Naive thymus-derived CD4-positive, alpha-beta T cell (primary cell): ENCODE measurements at regions of chr4 and their contacts with region 1.

Region 1: DNA sequence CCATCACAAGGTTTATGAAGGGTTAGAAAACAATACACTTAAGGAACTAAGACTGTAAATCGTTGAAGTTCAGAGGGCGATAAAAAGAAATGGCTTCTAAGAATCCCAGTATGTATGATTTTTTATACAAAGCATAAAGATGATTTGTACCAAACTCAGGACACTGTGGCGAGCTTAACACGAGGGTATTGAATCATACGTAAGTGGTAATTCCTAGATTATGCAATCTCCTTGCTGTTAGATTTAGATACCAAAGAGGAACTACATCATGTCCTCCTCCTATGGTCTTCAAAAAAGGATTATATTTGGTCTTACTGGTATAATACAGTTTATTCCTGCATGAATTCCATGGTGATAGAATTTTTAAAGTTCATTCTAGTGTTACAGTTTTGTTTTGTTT is 23.9 kb downstream of the NFKB1 start:
- DNase-seq: no peak
- ATAC-seq: peak; percentile 51
- H3K4me3 ChIP-seq: no peak overlapping the region
- H3K4me3 Mint-ChIP-seq: peak overlapping the region in 3 of 10 donors; percentile 7 to 56 (median 8)
- H3K27ac ChIP-seq: no peak overlapping the region
- H3K27ac Mint-ChIP-seq: peak overlapping the region in 8 of 9 donors; percentile 11 to 95 (median 75)
- H3K4me1 ChIP-seq: peaks cover 11 to 63% of the 10 kb centered on the region in 2 donors
- H3K4me1 Mint-ChIP-seq: peaks cover 52 to 100% (median 90%) of the 10 kb centered on the region in 7 donors
- H3K27me3 ChIP-seq: no peaks in the 10 kb centered on the region
- H3K27me3 Mint-ChIP-seq: no peaks in the 10 kb centered on the region

Region 2: GRCh38 chr4:102439236-102439614 is 85.9 kb before region 1 on chr4:
- CTCF ChIA-PET with region 1: no interaction called
- POLR2A ChIA-PET with region 1: no interaction called
- intact Hi-C with region 1: no loop called
- DNase-seq: no peak
- ATAC-seq: no peak
- H3K4me3 ChIP-seq: no peak overlapping the region
- H3K4me3 Mint-ChIP-seq: no peak overlapping the region
- H3K27ac ChIP-seq: no peak overlapping the region
- H3K27ac Mint-ChIP-seq: peak overlapping the region in 1 of 9 donors; percentile 29
- H3K4me1 ChIP-seq: no peaks in the 10 kb centered on the region
- H3K4me1 Mint-ChIP-seq: peaks cover 0 to 3% (median 0%) of the 10 kb centered on the region in 7 donors
- H3K27me3 ChIP-seq: no peaks in the 10 kb centered on the region
- H3K27me3 Mint-ChIP-seq: peaks cover 0 to 9% (median 0%) of the 10 kb centered on the region in 5 donors

Region 3: DNA sequence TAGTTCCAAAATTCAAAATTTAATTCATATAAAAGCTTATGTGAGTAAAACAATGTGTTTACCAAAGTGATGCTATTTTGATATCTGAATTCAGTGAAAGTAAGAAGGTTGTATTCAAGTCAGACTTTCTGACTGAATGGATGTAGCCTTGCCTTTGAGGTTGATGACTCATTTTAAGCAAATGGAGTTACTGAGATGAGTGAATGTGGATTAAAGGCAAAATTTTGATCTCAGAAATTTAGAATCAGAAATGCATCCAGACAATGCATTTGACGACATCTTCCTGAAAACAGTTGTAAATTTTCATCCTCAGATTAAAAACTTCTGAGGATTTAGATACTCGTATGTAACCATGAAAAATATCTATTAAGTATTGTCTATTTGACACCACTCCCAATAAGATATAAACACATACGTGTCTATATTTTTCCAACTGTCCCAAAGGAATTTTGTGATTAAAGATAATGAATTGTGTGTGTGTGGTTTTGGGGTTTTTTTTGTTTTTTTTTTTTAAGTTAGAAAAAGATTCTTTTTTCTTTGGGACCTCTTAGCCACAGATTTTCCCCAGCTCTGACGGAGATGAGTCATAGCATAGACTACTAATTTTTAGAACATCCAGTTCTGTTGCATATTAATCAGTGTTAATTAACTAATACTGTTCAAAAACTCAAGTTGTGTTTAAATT is 10.4 kb after region 1 on chr4:
- CTCF ChIA-PET with region 1: interaction called, 4 read pairs
- POLR2A ChIA-PET with region 1: interaction called, 4 read pairs
- intact Hi-C with region 1: loop called (anchors 1 kb)
- DNase-seq: no peak
- ATAC-seq: peak; percentile 30
- H3K4me3 ChIP-seq: no peak overlapping the region
- H3K4me3 Mint-ChIP-seq: no peak overlapping the region
- H3K27ac ChIP-seq: no peak overlapping the region
- H3K27ac Mint-ChIP-seq: peak overlapping the region in 1 of 9 donors; percentile 62
- H3K4me1 ChIP-seq: peaks cover 19 to 21% of the 10 kb centered on the region in 2 donors
- H3K4me1 Mint-ChIP-seq: peaks cover 22 to 71% (median 53%) of the 10 kb centered on the region in 7 donors
- H3K27me3 ChIP-seq: no peaks in the 10 kb centered on the region
- H3K27me3 Mint-ChIP-seq: no peaks in the 10 kb centered on the region

Region 4: GRCh38 chr4:102543030-102543928 is 18.2 kb after region 1 on chr4:
- CTCF ChIA-PET with region 1: interaction called, 3 read pairs
- POLR2A ChIA-PET with region 1: interaction called, 3 read pairs
- intact Hi-C with region 1: loop called in 1 of 2 experiments (anchors 2 kb)
- DNase-seq: no peak
- ATAC-seq: no peak
- H3K4me3 ChIP-seq: no peak overlapping the region
- H3K4me3 Mint-ChIP-seq: no peak overlapping the region
- H3K27ac ChIP-seq: no peak overlapping the region
- H3K27ac Mint-ChIP-seq: peak overlapping the region in 3 of 9 donors; percentile 46 to 75 (median 74)
- H3K4me1 ChIP-seq: peaks cover 0 to 4% of the 10 kb centered on the region in 2 donors
- H3K4me1 Mint-ChIP-seq: peaks cover 23 to 67% (median 54%) of the 10 kb centered on the region in 7 donors
- H3K27me3 ChIP-seq: no peaks in the 10 kb centered on the region
- H3K27me3 Mint-ChIP-seq: no peaks in the 10 kb centered on the region

Region 5: GRCh38 chr4:102572452-102572851 is 47.4 kb after region 1 on chr4:
- CTCF ChIA-PET with region 1: no interaction called
- POLR2A ChIA-PET with region 1: no interaction called
- intact Hi-C with region 1: loop called in 1 of 2 experiments (anchors 2 kb)
- DNase-seq: no peak
- ATAC-seq: no peak
- H3K4me3 ChIP-seq: no peak overlapping the region
- H3K4me3 Mint-ChIP-seq: peak overlapping the region in 1 of 10 donors; percentile 74
- H3K27ac ChIP-seq: no peak overlapping the region
- H3K27ac Mint-ChIP-seq: peak overlapping the region in 6 of 9 donors; percentile 27 to 70 (median 46)
- H3K4me1 ChIP-seq: peaks cover 13 to 35% of the 10 kb centered on the region in 2 donors
- H3K4me1 Mint-ChIP-seq: peaks cover 41 to 77% (median 64%) of the 10 kb centered on the region in 7 donors
- H3K27me3 ChIP-seq: no peaks in the 10 kb centered on the region
- H3K27me3 Mint-ChIP-seq: no peaks in the 10 kb centered on the region